Testis (tissue), 5 donors: ENCODE measurements at regions of chr10 and their contacts with region 1.

Region 1: GRCh38 chr10:84537447-84537931 is 209.1 kb downstream of the CCSER2 start:
- DNase-seq: peak; percentile 63
- H3K4me3 ChIP-seq: no peak overlapping the region
- H3K27ac ChIP-seq: no peak overlapping the region
- H3K4me1 ChIP-seq: peaks cover 8% of the 10 kb centered on the region
- H3K27me3 ChIP-seq: no peaks in the 10 kb centered on the region
- CTCF ChIP-seq: peak; percentile 73 to 95 (median 85)
- POLR2A ChIP-seq: no peak

Region 2: GRCh38 chr10:84264611-84265141 is 272.8 kb before region 1 on chr10:
- intact Hi-C with region 1: loop called (anchors 5 kb)
- DNase-seq: peak; percentile 85
- H3K4me3 ChIP-seq: no peak overlapping the region
- H3K27ac ChIP-seq: no peak overlapping the region
- H3K4me1 ChIP-seq: no peaks in the 10 kb centered on the region
- H3K27me3 ChIP-seq: no peaks in the 10 kb centered on the region
- CTCF ChIP-seq: peak; percentile 72 to 90 (median 81)
- POLR2A ChIP-seq: no peak

Region 3: GRCh38 chr10:84333864-84334451 is 203.5 kb before region 1 on chr10:
- intact Hi-C with region 1: no loop called
- DNase-seq: no peak
- H3K4me3 ChIP-seq: no peak overlapping the region
- H3K27ac ChIP-seq: no peak overlapping the region
- H3K4me1 ChIP-seq: peaks cover 14% of the 10 kb centered on the region
- H3K27me3 ChIP-seq: no peaks in the 10 kb centered on the region
- CTCF ChIP-seq: no peak
- POLR2A ChIP-seq: no peak

Region 4: GRCh38 chr10:84375011-84375410 is 162.5 kb before region 1 on chr10:
- intact Hi-C with region 1: loop called (anchors 10 kb)
- DNase-seq: peak; percentile 43
- H3K4me3 ChIP-seq: no peak overlapping the region
- H3K27ac ChIP-seq: no peak overlapping the region
- H3K4me1 ChIP-seq: no peaks in the 10 kb centered on the region
- H3K27me3 ChIP-seq: no peaks in the 10 kb centered on the region
- CTCF ChIP-seq: peak in 2 of 3 experiments; percentile 54 to 58
- POLR2A ChIP-seq: no peak

Region 5: GRCh38 chr10:84599254-84599653 is 61.8 kb after region 1 on chr10:
- intact Hi-C with region 1: no loop called
- DNase-seq: no peak
- H3K4me3 ChIP-seq: no peak overlapping the region
- H3K27ac ChIP-seq: no peak overlapping the region
- H3K4me1 ChIP-seq: no peaks in the 10 kb centered on the region
- H3K27me3 ChIP-seq: no peaks in the 10 kb centered on the region
- CTCF ChIP-seq: no peak
- POLR2A ChIP-seq: no peak

Region 6: DNA sequence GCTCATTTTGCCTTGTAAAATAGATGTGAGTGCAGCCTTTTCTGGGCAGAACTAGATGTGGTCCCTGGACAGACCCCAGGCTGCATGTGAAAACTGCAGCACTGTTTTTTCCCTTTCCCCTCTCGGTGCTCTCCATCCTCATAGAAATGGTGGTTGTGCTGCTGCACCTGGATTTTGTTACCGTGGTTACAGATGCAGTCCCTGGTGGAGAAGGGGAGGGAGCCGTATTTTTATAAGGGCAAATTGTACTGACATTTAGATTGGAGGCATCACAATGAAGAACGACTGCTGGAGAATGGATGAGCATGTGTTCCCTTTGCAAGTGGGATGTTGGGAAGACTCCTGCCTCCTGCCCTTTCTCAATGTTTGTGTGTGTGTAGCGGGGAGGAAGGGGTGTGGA is 260.8 kb after region 1 on chr10:
- intact Hi-C with region 1: no loop called
- DNase-seq: no peak
- H3K4me3 ChIP-seq: no peak overlapping the region
- H3K27ac ChIP-seq: no peak overlapping the region
- H3K4me1 ChIP-seq: no peaks in the 10 kb centered on the region
- H3K27me3 ChIP-seq: no peaks in the 10 kb centered on the region
- CTCF ChIP-seq: no peak
- POLR2A ChIP-seq: no peak

Region 7: DNA sequence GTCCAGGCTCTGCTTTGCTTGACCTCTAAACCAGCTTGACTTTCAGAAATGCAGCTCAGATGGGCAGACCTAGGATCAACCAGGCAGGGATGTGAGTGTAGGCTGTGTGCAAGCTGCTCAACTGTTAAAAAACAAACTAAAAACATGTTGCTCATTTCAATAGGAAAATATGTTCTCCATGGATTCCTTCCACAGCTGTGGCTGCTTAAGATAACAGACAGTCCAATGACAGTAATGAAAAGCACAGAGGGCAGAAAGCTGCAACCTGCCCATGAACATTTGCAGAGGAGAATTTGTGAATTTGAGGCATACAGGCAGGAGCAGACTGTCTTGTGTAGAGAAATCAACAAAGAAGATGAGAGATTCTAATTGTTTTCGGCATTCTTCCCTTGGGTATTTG is 325.1 kb after region 1 on chr10:
- intact Hi-C with region 1: no loop called
- DNase-seq: no peak
- H3K4me3 ChIP-seq: no peak overlapping the region
- H3K27ac ChIP-seq: no peak overlapping the region
- H3K4me1 ChIP-seq: no peaks in the 10 kb centered on the region
- H3K27me3 ChIP-seq: no peaks in the 10 kb centered on the region
- CTCF ChIP-seq: no peak
- POLR2A ChIP-seq: no peak